H1 (cell line): ENCODE measurements at regions of chr22 and their contacts with region 1.

Region 1: GRCh38 chr22:36065775-36066559 is 37.3 kb upstream of the RBFOX2 start:
- DNase-seq: peak; percentile 88 to 93
- H3K4me3 ChIP-seq: peak overlapping the region; percentile 36 to 60 (median 40)
- H3K27ac ChIP-seq: peak overlapping the region; percentile 38; the same call in 1 of the 2 replicates
- H3K4me1 ChIP-seq: peaks cover 0 to 5% (median 3%) of the 10 kb centered on the region in 4 experiments; a peak in 4 of 7 replicates
- H3K27me3 ChIP-seq: peaks cover 0 to 4% (median 0%) of the 10 kb centered on the region in 4 experiments; a peak in 1 of 7 replicates
- CTCF ChIP-seq: peak; percentile 78 to 88 (median 85)
- EP300 ChIP-seq: no peak
- POLR2A ChIP-seq: peak in 1 of 2 experiments; percentile 86; a peak in 2 of 3 replicates
- RAD21 ChIP-seq: peak; percentile 50 to 67

Region 2: DNA sequence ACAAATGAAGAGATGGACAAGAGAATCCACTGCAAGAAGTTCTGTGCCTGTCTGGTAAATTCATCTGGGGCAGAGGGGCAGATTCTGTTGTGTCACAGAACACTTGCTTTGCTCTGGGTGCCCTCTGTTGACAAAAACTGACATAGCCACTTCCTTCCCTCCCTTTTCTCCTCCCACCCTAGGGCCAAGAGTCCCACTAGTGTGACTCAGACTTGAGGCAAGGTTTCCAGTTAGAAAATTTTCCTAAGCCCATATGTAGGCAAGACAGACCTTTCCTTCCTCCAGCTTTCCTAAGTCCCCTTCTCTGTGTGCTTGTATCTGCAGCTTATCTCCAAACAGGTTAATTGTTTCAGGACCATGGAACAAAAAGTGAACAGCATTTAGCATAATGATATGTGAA is 144.2 kb before region 1 on chr22:
- CTCF ChIA-PET with region 1: interaction called, 16 read pairs
- POLR2A ChIA-PET with region 1: no interaction called
- DNase-seq: peak in 1 of 2 experiments; percentile 59
- H3K4me3 ChIP-seq: no peak overlapping the region
- H3K27ac ChIP-seq: no peak overlapping the region
- H3K4me1 ChIP-seq: peaks cover 0 to 7% (median 0%) of the 10 kb centered on the region in 4 experiments; a peak in 1 of 7 replicates
- H3K27me3 ChIP-seq: no peaks in the 10 kb centered on the region
- CTCF ChIP-seq: peak; percentile 48 to 74 (median 70)
- EP300 ChIP-seq: no peak
- POLR2A ChIP-seq: no peak
- RAD21 ChIP-seq: peak; percentile 88 to 92

Region 3: DNA sequence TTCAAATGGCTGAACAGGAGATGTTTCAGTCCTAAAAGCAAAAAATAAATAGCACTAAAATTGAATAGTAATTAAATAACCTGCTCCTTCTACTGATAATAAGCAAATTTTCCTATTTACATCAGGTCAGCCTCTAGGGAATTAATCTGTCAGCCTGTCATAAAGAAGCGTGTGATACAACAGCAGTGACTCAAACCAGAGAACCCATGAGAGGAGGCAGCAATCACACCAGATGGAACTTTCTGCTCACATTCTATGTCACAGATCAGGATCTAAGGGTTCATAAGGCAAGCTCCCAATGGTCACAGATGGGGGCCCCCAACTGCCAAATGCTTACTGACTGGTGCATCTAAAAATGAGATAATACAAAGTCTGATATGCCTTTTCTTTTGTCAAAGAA is 78.5 kb before region 1 on chr22:
- CTCF ChIA-PET with region 1: interaction called, 11 read pairs
- POLR2A ChIA-PET with region 1: no interaction called
- DNase-seq: no peak
- H3K4me3 ChIP-seq: no peak overlapping the region
- H3K27ac ChIP-seq: no peak overlapping the region
- H3K4me1 ChIP-seq: peaks cover 0 to 9% (median under 1%) of the 10 kb centered on the region in 4 experiments; a peak in 3 of 7 replicates
- H3K27me3 ChIP-seq: no peaks in the 10 kb centered on the region
- CTCF ChIP-seq: no peak
- EP300 ChIP-seq: no peak
- POLR2A ChIP-seq: no peak
- RAD21 ChIP-seq: no peak

Region 4: GRCh38 chr22:36052505-36053270 is 13.3 kb before region 1 on chr22:
- CTCF ChIA-PET with region 1: interaction called, 55 read pairs
- POLR2A ChIA-PET with region 1: interaction called, 8 read pairs
- DNase-seq: no peak
- H3K4me3 ChIP-seq: no peak overlapping the region
- H3K27ac ChIP-seq: no peak overlapping the region
- H3K4me1 ChIP-seq: no peaks in the 10 kb centered on the region
- H3K27me3 ChIP-seq: no peaks in the 10 kb centered on the region
- CTCF ChIP-seq: no peak
- EP300 ChIP-seq: no peak
- POLR2A ChIP-seq: no peak
- RAD21 ChIP-seq: no peak

Region 5: GRCh38 chr22:36104988-36105387 is 39.0 kb after region 1 on chr22:
- CTCF ChIA-PET with region 1: interaction called, 20 read pairs
- POLR2A ChIA-PET with region 1: no interaction called
- DNase-seq: no peak
- H3K4me3 ChIP-seq: no peak overlapping the region
- H3K27ac ChIP-seq: no peak overlapping the region
- H3K4me1 ChIP-seq: peaks cover 0 to 1% (median under 1%) of the 10 kb centered on the region in 4 experiments; a peak in 2 of 7 replicates
- H3K27me3 ChIP-seq: no peaks in the 10 kb centered on the region
- CTCF ChIP-seq: no peak
- EP300 ChIP-seq: no peak
- POLR2A ChIP-seq: no peak
- RAD21 ChIP-seq: no peak

Region 6: GRCh38 chr22:36194971-36195370 is 129.0 kb after region 1 on chr22:
- CTCF ChIA-PET with region 1: no interaction called
- POLR2A ChIA-PET with region 1: no interaction called
- DNase-seq: peak; percentile 36 to 66
- H3K4me3 ChIP-seq: no peak overlapping the region
- H3K27ac ChIP-seq: no peak overlapping the region
- H3K4me1 ChIP-seq: peaks cover 0 to 11% (median 9%) of the 10 kb centered on the region in 4 experiments; a peak in 6 of 7 replicates
- H3K27me3 ChIP-seq: no peaks in the 10 kb centered on the region
- CTCF ChIP-seq: peak; percentile 36 to 82 (median 81)
- EP300 ChIP-seq: no peak
- POLR2A ChIP-seq: no peak
- RAD21 ChIP-seq: peak; percentile 78 to 83